ENCODE measurements at regions of chr1 and their contacts with region 1.

Region 1: GRCh38 chr1:203765029-203765837 is at the start of gene LAX1:
- DNase-seq: peak; percentile 88
- H3K4me3 Mint-ChIP-seq: peak within 1 kb of the TSS; percentile 88
- H3K27ac Mint-ChIP-seq: peak within 1 kb of the TSS; percentile 99
- H3K4me1 Mint-ChIP-seq: peaks cover 54% of the 10 kb centered on the region
- H3K27me3 Mint-ChIP-seq: no peaks in the 10 kb centered on the region
- total RNA-seq, gene LAX1: 18.9 to 20.5 TPM

Region 2: GRCh38 chr1:203746281-203746680 is 19.0 kb before region 1 on chr1:
- CTCF ChIA-PET with region 1: interaction called, 13 read pairs
- POLR2A ChIA-PET with region 1: no interaction called
- DNase-seq: no peak
- H3K4me3 Mint-ChIP-seq: no peak overlapping the region
- H3K27ac Mint-ChIP-seq: no peak overlapping the region
- H3K4me1 Mint-ChIP-seq: peaks cover 18% of the 10 kb centered on the region
- H3K27me3 Mint-ChIP-seq: no peaks in the 10 kb centered on the region

Region 3: GRCh38 chr1:203839059-203839458 is 73.8 kb after region 1 on chr1:
- CTCF ChIA-PET with region 1: no interaction called
- POLR2A ChIA-PET with region 1: no interaction called
- DNase-seq: no peak
- H3K4me3 Mint-ChIP-seq: no peak overlapping the region
- H3K27ac Mint-ChIP-seq: no peak overlapping the region
- H3K4me1 Mint-ChIP-seq: no peaks in the 10 kb centered on the region
- H3K27me3 Mint-ChIP-seq: no peaks in the 10 kb centered on the region

Region 4: GRCh38 chr1:204036880-204037655 is 271.8 kb after region 1 on chr1:
- CTCF ChIA-PET with region 1: no interaction called
- POLR2A ChIA-PET with region 1: no interaction called
- DNase-seq: no peak
- H3K4me3 Mint-ChIP-seq: no peak overlapping the region
- H3K27ac Mint-ChIP-seq: no peak overlapping the region
- H3K4me1 Mint-ChIP-seq: no peaks in the 10 kb centered on the region
- H3K27me3 Mint-ChIP-seq: peaks cover 4% of the 10 kb centered on the region